Heart left ventricle (tissue), 16 donors: ENCODE measurements at regions of chr6 and their contacts with region 1.

Region 1: DNA sequence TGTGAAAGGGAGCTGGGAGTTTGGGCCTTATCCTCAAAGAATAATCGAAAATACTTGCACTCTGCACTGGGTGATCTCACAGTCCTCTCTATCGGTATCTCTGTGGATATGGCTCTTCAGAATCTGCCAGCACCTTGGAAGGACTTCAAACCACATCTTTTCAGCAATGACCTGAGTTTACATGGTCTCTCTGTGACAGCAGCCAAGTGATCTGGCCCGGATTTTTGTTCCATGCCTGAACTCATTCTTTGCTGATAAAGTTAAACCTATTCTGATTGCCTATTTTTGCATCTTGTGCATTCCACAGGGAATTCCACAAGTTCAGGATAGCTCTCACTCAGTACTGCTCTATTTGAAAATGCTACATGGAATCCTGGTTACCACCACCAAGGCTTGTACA is 98.9 kb downstream of the HDGFL1 start:
- DNase-seq: peak in 4 of 5 donors; percentile 40 to 60 (median 48)
- ATAC-seq: peak; percentile 85 to 95 (median 92)
- H3K4me3 ChIP-seq: no peak overlapping the region
- H3K27ac ChIP-seq: peak overlapping the region; percentile 6 to 72 (median 51)
- H3K4me1 ChIP-seq: peaks cover 0 to 61% (median 39%) of the 10 kb centered on the region in 12 donors
- H3K27me3 ChIP-seq: no peaks in the 10 kb centered on the region
- CTCF ChIP-seq: no peak
- POLR2A ChIP-seq: no peak

Region 2: DNA sequence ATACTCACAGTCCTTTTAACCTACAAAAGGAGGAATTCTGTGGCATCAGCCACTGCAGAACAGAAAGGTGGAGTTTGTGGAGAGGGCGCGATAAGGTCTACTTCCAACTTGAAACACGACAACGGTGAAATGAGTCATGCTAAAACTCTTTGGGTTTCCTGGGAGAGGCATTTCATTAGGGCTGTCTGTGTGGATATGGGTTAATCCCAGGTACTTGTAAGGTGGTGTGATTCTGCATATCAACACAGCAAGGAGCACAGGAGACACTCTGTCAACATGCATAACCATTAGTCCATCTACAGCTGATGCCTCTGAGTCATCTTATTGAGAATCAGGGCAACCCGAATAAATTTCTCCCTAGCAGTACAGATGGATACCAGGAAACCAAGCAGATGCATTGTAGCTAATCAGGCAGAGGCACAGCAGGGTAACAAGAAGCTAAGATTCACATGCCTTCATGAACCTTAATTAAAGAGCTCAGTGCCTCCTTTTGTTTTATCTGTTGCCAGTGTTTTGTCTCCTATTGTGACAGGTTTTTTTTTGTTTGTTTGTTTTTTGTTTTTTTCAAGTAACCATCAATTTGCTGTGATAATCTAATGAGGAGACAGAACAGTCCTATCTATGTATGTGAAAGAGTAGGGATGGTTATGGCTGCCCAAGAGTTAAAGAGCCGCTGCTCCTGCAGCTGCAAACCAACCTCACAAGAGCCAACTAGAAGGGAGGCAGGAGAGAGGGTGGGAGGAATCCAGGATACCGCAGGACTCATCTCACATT is 1390.5 kb before region 1 on chr6:
- intact Hi-C with region 1: no loop called
- DNase-seq: no peak
- ATAC-seq: peak in 3 of 4 donors; percentile 13 to 45 (median 21)
- H3K4me3 ChIP-seq: no peak overlapping the region
- H3K27ac ChIP-seq: no peak overlapping the region
- H3K4me1 ChIP-seq: peaks cover 0 to 12% (median 0%) of the 10 kb centered on the region in 12 donors
- H3K27me3 ChIP-seq: no peaks in the 10 kb centered on the region
- CTCF ChIP-seq: no peak
- POLR2A ChIP-seq: no peak

Region 3: DNA sequence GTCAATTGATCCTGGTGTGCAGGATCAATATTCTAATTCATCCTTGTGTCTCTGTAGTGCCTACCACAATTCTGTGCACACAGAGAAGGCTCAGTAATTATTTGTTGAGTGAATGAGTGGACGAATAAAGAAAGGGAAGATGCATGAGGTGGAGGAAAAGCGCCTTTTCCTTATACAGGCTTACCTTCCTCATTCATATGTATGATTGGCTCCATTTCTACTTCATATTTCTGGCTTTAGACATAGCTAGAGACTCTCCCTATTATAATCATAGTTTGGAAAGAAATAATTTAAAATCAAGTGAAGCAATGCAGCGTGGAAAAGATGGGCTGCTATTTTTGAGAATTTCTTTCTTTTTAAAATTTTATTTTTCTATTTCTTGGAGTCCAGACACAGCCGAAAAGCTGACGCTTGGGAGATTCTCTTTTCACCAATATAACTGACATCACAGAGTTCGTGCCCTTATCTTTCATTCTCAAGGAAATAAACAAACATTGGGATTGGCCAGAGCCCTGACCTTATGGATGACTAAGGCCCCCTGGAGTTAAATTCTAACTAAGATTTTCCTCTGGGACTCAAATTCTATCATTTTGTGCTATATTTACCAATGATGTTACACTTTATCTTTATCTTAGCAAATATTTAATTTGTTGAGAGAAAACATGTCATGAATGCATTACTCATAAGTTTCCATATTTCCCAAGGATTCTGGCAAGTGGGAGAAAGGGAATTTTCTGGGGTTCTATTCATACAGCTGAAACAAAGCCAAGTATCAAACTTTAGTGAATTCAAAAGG is 419.6 kb before region 1 on chr6:
- intact Hi-C with region 1: no loop called
- DNase-seq: no peak
- ATAC-seq: peak in 2 of 4 donors; percentile 70 to 71
- H3K4me3 ChIP-seq: no peak overlapping the region
- H3K27ac ChIP-seq: peak overlapping the region in 5 of 12 donors; percentile 4 to 46 (median 12)
- H3K4me1 ChIP-seq: peaks cover 0 to 17% (median 0%) of the 10 kb centered on the region in 12 donors
- H3K27me3 ChIP-seq: no peaks in the 10 kb centered on the region
- CTCF ChIP-seq: no peak
- POLR2A ChIP-seq: no peak

Region 4: GRCh38 chr6:22471132-22471690 is 197.1 kb before region 1 on chr6:
- intact Hi-C with region 1: loop called in 1 of 10 experiments (anchors 10 kb)
- DNase-seq: peak in 4 of 5 donors; percentile 38 to 69 (median 63)
- ATAC-seq: peak; percentile 85 to 93 (median 87)
- H3K4me3 ChIP-seq: peak overlapping the region in 2 of 12 donors; percentile 2 to 4
- H3K27ac ChIP-seq: peak overlapping the region in 11 of 12 donors; percentile 22 to 70 (median 40)
- H3K4me1 ChIP-seq: peaks cover 10 to 38% (median 22%) of the 10 kb centered on the region in 12 donors
- H3K27me3 ChIP-seq: no peaks in the 10 kb centered on the region
- CTCF ChIP-seq: peak in 8 of 12 donors; percentile 31 to 56 (median 40)
- POLR2A ChIP-seq: no peak

Region 5: DNA sequence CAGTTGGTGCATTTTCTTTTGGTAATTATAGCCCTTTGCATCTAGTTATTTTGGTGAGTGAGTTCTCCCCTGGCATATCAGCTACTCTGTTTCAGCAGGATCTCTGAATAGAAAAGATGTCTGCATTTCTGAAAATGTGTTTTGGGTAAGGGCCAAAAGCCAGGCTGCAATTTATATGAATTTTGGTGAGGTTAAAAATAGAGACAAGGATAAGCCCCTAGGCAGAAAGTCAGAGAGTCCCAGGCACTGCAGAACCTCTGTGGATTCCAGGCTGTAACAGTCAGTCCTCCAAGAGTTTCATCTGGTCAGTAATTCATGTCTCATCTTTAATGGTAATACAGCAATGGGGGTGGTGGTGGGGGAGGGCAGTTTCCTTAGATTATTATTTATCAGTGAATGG is 46.0 kb before region 1 on chr6:
- intact Hi-C with region 1: loop called in 1 of 10 experiments (anchors 5 kb)
- DNase-seq: no peak
- ATAC-seq: no peak
- H3K4me3 ChIP-seq: no peak overlapping the region
- H3K27ac ChIP-seq: peak overlapping the region in 2 of 12 donors; percentile 10 to 46
- H3K4me1 ChIP-seq: peaks cover 0 to 24% (median 4%) of the 10 kb centered on the region in 12 donors
- H3K27me3 ChIP-seq: no peaks in the 10 kb centered on the region
- CTCF ChIP-seq: no peak
- POLR2A ChIP-seq: no peak

Region 6: GRCh38 chr6:22727710-22728109 is 59.4 kb after region 1 on chr6:
- intact Hi-C with region 1: loop called in 1 of 10 experiments (anchors 10 kb)
- DNase-seq: no peak
- ATAC-seq: peak in 1 of 4 donors; percentile 43
- H3K4me3 ChIP-seq: no peak overlapping the region
- H3K27ac ChIP-seq: no peak overlapping the region
- H3K4me1 ChIP-seq: peaks cover 0 to 10% (median 0%) of the 10 kb centered on the region in 12 donors
- H3K27me3 ChIP-seq: no peaks in the 10 kb centered on the region
- CTCF ChIP-seq: no peak
- POLR2A ChIP-seq: no peak

Region 7: DNA sequence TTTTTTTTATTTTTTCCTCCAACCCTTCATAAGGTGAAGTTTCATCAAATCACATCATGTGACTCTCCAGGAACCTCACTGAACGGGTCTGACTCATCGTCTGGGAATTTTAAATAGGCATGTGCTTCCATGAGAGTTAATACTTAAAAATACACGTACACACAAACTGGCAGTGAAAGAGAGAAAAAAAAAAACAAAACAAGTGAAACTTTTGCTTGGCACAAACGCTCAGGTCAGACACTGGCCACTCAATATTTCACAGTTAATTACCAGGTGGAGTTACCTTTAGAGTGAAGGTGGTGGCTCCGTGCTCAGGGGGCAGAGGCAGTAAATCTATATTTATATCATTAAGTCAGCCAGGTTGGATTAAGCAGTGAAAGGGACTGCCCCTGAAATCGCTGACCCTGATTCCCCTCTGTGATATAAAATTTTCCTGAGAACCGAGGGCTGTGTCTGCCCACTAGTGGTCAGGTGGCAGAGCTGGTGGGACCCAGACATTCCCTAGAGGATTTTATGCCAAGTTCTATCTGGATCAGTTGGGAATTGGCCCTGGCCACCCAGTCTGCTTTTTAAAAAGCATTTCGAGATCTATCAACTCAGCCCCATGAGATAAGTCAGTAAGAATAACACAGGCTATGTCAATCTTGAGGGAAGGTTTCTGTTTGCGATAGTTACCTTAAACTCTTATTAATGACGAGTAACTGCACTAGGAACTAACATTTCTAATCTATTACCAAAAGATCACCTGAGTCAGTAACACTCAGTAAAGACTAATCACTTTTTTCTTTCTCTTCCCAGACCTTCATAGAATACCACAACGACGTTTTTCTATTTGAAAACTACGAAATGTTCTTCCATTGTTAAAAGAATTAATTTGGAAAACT is 160.1 kb after region 1 on chr6:
- intact Hi-C with region 1: loop called in 1 of 10 experiments (anchors 10 kb)
- DNase-seq: peak in 2 of 5 donors; percentile 22 to 35
- ATAC-seq: peak; percentile 60 to 95 (median 82)
- H3K4me3 ChIP-seq: peak overlapping the region in 4 of 12 donors; percentile 3 to 23 (median 12)
- H3K27ac ChIP-seq: peak overlapping the region in 8 of 12 donors; percentile 15 to 67 (median 48)
- H3K4me1 ChIP-seq: peaks cover 0 to 18% (median 13%) of the 10 kb centered on the region in 12 donors
- H3K27me3 ChIP-seq: no peaks in the 10 kb centered on the region
- CTCF ChIP-seq: peak; percentile 29 to 71 (median 58)
- POLR2A ChIP-seq: no peak